Mammary epithelial cell (primary cell): ENCODE measurements at regions of chr12 and their contacts with region 1.

Region 1: DNA sequence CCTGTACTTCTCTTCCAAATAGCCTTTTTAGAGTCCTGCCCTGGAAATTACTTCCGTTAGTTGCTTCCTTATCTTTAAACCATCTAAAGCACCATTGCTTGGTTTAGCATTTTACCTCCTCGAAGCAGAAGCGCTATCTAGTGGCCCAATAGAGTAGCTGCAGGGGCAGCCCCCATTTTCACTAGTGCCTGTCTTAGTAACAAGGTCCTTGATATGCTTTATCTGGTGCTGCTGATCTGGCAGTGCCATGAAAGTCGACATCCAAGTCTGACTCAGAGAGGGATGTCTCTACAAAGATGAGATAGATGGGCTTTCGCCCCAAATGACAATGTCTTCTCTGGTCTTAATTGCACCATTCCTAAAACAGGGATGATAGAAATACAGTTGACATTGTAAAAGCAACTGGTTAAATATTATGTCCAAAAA is 25.0 kb upstream of the CIT start:
- DNase-seq: peak; percentile 50
- H3K4me3 ChIP-seq: no peak overlapping the region
- H3K27ac ChIP-seq: no peak overlapping the region
- H3K4me1 ChIP-seq: no peaks in the 10 kb centered on the region
- H3K27me3 ChIP-seq: no peaks in the 10 kb centered on the region
- CTCF ChIP-seq: peak; percentile 87 to 93

Region 2: DNA sequence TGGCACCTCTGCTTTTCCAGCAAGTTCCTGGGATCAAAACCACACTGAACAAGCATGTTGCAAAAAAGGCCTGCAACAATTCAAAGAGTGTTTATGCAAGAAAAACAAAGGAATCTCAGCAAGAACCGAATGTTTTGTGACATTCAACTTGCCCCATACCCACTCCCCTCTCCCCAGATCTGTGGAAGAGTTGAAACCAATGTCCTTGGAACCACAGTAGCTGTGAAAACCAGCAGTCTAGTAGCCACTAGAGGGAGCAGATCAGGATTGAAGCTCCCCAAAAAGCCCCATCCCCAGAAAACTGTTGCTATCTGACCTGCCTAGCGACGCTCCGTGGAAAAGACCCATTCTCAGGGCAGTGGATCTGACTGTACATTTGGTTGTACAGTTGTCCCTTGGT is 207.1 kb before region 1 on chr12:
- CTCF ChIA-PET with region 1: no interaction called
- dilution Hi-C with region 1: no loop called
- in situ Hi-C with region 1: no loop called
- intact Hi-C with region 1: loop called (anchors 1 kb)
- DNase-seq: no peak
- H3K4me3 ChIP-seq: no peak overlapping the region
- H3K27ac ChIP-seq: no peak overlapping the region
- H3K4me1 ChIP-seq: no peaks in the 10 kb centered on the region
- H3K27me3 ChIP-seq: no peaks in the 10 kb centered on the region
- CTCF ChIP-seq: peak; percentile 25 to 57

Region 3: GRCh38 chr12:119780786-119781434 is 121.2 kb before region 1 on chr12:
- CTCF ChIA-PET with region 1: no interaction called
- dilution Hi-C with region 1: no loop called
- in situ Hi-C with region 1: no loop called
- intact Hi-C with region 1: loop called (anchors 1 kb)
- DNase-seq: peak; percentile 61
- H3K4me3 ChIP-seq: no peak overlapping the region
- H3K27ac ChIP-seq: no peak overlapping the region
- H3K4me1 ChIP-seq: no peaks in the 10 kb centered on the region
- H3K27me3 ChIP-seq: no peaks in the 10 kb centered on the region
- CTCF ChIP-seq: peak; percentile 83 to 91

Region 4: DNA sequence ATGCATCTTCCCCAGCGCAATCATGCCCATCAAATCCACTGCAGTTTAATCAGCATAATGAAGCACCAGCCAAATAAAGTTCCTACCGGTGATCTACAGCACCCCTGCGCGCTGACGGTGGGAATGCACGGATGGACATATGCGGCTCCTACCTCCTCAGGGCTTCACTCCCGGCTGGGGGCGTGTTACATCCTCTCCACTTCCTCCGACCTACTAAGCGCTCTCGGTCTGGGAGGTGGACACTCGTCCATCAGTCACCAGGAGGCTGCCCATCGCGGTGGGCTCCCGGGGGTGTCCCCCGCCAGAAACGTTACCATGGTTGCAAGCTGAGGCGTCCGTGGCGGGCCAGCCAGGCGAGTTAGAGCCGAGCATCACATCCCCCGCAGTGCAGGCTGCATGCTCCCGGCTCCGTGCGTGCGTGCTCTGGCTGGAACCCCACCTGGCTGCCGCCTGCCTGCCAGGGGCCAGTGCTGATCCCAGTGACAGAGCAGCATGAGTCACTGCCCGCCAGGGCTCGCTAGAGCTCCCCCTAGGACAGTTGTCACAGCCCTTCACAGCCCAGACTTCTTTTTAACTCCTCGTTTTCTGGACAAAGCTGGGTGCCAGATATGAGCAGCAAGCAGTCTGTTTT is 98.0 kb before region 1 on chr12:
- CTCF ChIA-PET with region 1: no interaction called
- dilution Hi-C with region 1: no loop called
- in situ Hi-C with region 1: no loop called
- intact Hi-C with region 1: loop called (anchors 1 kb)
- DNase-seq: peak; percentile 77
- H3K4me3 ChIP-seq: peak overlapping the region in 2 of 3 experiments; percentile 25
- H3K27ac ChIP-seq: no peak overlapping the region
- H3K4me1 ChIP-seq: peaks cover 23% of the 10 kb centered on the region
- H3K27me3 ChIP-seq: no peaks in the 10 kb centered on the region
- CTCF ChIP-seq: peak; percentile 26 to 75

Region 5: DNA sequence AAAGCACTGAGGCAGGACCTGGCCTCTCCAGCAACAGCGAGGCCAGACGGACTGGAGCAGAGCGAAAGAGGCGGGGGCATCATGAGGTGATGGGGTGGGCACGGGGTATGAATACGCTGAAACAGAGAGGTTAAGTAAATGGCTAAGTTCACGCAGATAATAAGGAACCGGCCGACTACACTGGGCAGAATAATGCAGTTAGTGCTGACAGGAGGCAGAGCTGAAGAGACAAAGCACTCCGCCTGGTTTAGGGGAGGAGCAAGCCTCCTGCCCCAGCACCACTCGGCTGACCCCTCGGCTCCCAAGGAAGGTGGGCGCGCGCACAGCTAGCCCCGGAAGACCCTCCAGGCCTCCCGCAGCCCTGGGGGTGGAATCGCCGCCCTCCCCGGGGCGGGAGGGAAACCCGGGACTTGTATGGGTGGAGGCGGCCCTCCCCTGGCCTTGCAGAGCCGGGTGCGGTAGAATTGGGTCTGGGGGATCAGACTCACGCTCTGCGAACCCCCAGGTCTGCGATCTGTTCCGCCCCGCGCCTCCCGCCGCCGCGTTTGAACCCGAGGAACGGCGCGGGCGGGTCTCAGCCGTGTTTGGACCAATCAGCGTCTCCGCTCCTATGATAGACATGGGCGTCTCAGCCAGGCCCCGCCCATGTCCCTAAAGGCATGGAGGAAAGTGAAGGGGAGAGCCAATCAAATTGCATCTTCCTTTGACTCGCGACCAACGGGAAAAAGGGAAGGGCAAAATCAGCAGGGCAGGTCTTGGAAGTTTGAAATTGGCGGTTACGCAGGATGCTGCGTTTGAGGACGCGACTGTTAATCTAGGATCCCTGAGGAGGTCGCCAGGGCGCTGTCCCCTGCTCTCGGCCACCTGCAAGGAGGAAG is 25.1 kb before region 1 on chr12 and contains the start of gene CIT:
- CTCF ChIA-PET with region 1: interaction called, 23 read pairs
- dilution Hi-C with region 1: no loop called
- in situ Hi-C with region 1: no loop called
- intact Hi-C with region 1: no loop called
- DNase-seq: peak; percentile 93
- H3K4me3 ChIP-seq: peak within 1 kb of the TSS; percentile 65 to 100 (median 90)
- H3K27ac ChIP-seq: peak within 1 kb of the TSS; percentile 59
- H3K4me1 ChIP-seq: peaks cover 11% of the 10 kb centered on the region
- H3K27me3 ChIP-seq: no peaks in the 10 kb centered on the region
- CTCF ChIP-seq: no peak
- total RNA-seq, gene CIT: 3.2 to 30.0 TPM

Region 6: GRCh38 chr12:119964929-119965328 is 62.8 kb after region 1 on chr12:
- CTCF ChIA-PET with region 1: no interaction called
- dilution Hi-C with region 1: loop called (anchors 10 kb)
- in situ Hi-C with region 1: no loop called
- intact Hi-C with region 1: no loop called
- DNase-seq: no peak
- H3K4me3 ChIP-seq: no peak overlapping the region
- H3K27ac ChIP-seq: no peak overlapping the region
- H3K4me1 ChIP-seq: no peaks in the 10 kb centered on the region
- H3K27me3 ChIP-seq: no peaks in the 10 kb centered on the region
- CTCF ChIP-seq: no peak